Motor neuron (in vitro differentiated cells): ENCODE measurements at regions of chr12 and their contacts with region 1.

Region 1: DNA sequence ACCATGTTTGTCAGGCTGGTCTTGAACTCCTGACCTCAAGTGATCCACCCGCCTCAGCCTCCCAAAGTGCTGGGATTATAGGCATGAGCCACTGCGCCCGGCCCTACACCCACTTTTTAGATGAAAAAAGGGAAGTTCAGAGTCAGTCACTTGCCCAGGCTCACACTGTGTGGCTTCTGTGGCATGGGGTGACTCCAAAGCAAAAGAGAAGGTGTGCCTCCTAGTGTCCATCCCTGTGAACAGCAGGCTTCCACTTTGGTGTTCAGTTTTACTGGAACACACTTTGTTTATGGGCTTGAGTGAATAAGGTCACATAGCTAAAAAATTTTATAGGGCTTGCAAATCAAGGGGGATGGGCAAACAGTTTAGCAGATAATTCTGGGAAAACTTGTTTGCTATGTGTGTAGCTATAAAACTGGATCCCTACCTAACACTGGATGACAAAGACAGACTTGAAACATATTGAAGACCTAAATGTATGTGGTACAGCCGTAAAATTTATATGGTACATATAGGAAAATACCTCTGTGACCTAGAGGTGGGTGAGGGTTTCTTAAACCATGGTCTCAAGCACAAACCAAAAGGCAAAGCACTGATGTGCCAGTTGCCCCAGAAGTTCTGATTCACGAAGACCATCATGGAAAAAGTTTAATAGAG is 54.9 kb downstream of the EID3 start:
- ATAC-seq: peak in 4 of 8 experiments; percentile 18 to 63 (median 32)
- H3K4me3 ChIP-seq: no peak overlapping the region
- H3K27ac ChIP-seq: no peak overlapping the region
- H3K4me1 ChIP-seq: no peaks in the 10 kb centered on the region

Region 2: DNA sequence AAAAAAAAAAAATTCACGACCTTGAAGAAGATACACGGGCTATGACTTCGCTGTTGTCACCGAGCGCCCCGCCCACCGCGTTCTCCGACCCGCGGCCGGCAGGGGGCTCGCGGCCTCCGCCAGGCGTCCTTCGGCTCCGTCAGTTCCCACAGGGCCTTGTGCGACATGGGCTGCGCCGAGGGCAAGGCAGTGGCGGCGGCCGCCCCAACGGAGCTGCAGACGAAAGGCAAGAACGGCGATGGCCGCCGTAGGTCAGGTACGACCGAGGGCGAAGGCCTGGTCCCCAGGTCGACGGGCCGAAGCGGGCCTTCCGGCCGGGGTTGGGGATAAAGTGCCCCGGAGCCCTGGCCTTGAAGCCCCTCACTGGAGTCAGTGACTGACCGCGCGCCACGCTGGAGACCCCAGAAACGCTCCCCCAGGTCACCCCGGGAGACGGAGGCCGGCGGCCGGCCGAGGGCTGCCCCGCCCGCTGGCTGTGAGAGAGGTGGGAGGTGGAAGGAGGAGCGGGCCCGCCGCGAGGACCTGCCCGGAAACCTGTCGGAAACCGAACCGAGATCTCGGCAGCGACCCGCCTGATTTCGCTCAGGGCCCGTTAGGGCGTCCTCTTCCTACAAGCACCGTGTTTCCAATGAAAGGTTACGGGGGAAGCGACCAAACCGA is 142.7 kb before region 1 on chr12 and contains the start of gene TXNRD1:
- in situ Hi-C with region 1: loop called in 1 of 9 experiments (anchors 25 kb)
- ATAC-seq: peak; percentile 34 to 98 (median 93)
- H3K4me3 ChIP-seq: peak within 1 kb of the TSS; percentile 23 to 41 (median 27)
- H3K27ac ChIP-seq: no peak within 1 kb of the TSS
- H3K4me1 ChIP-seq: no peaks in the 10 kb centered on the region
- total RNA-seq, gene TXNRD1: 42.8 to 219 (median 87.5) TPM

Region 3: GRCh38 chr12:104865080-104865479 is 506.6 kb after region 1 on chr12:
- in situ Hi-C with region 1: loop called in 1 of 9 experiments (anchors 25 kb)
- ATAC-seq: no peak
- H3K4me3 ChIP-seq: no peak overlapping the region
- H3K27ac ChIP-seq: no peak overlapping the region
- H3K4me1 ChIP-seq: no peaks in the 10 kb centered on the region

Region 4: DNA sequence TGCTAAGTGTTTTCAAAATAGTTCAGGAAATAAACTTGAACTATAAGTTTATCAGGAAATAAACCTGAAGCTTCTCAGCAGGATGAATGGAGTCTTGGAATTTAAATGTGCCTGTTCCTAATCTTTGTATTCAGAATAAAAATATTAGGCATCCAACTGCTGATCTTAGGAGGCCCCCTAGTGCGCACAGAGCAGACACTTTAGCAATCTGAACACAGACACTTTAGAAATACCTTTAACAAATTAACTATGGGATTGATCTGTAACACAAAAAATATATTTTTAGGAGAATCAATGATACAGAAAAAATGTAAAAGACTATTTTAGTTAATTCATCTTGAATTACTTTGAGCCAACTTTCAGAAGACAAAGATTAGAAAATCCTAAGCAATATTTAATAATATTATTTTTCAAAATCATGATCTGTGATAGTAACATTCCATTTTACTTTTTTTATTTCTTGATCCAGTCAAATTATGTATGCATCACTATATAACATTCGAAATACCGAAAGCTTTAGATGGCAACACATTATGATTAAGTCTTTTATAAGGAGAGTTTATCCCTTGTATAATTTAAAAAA is 518.7 kb after region 1 on chr12:
- in situ Hi-C with region 1: loop called in 2 of 9 experiments (anchors 25 kb)
- ATAC-seq: peak in 5 of 8 experiments; percentile 37 to 84 (median 69)
- H3K4me3 ChIP-seq: no peak overlapping the region
- H3K27ac ChIP-seq: no peak overlapping the region
- H3K4me1 ChIP-seq: no peaks in the 10 kb centered on the region

Region 5: GRCh38 chr12:105053116-105053572 is 694.7 kb after region 1 on chr12:
- in situ Hi-C with region 1: loop called in 1 of 9 experiments (anchors 25 kb)
- ATAC-seq: peak; percentile 40 to 79 (median 70)
- H3K4me3 ChIP-seq: no peak overlapping the region
- H3K27ac ChIP-seq: no peak overlapping the region
- H3K4me1 ChIP-seq: no peaks in the 10 kb centered on the region